Naive thymus-derived CD8-positive, alpha-beta T cell (primary cell): ENCODE measurements at regions of chr5 and their contacts with region 1.

Region 1: DNA sequence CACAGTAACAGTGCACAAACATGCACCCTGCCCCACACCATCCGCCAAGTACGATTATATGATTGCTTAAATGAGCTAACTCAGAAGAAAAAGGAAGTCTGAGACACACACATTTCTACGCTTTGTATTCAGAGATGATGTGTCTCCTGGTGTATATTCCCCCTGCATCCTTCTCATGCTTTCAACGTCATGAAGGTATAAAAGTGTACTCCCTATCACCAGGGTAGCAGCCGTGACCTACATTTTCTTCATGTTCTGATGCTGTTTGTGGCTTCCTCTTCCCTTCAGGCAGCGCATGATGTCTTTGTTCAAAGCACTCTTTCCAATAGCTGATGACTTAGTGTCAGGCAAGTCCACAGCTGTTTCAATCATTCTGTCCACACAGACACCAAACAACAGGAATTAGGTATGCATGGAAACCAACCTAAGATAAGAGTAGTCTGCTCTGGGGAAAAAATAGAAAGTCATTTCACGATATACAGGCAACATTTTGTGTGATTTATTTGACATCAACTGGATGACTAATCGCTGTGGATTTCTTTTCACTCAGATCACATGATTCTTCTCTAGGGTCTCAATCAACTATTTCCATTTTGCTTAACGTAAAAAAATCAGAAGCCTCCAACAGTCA is 269.4 kb upstream of the PTGER4 start:
- DNase-seq: peak; percentile 24 to 95 (median 83)
- ATAC-seq: peak; percentile 78 to 80
- H3K4me3 Mint-ChIP-seq: peak overlapping the region; percentile 59 to 84 (median 78)
- H3K27ac Mint-ChIP-seq: peak overlapping the region; percentile 97 to 100 (median 99)
- H3K4me1 Mint-ChIP-seq: peaks cover 20 to 75% (median 62%) of the 10 kb centered on the region in 4 donors
- H3K27me3 Mint-ChIP-seq: no peaks in the 10 kb centered on the region

Region 2: GRCh38 chr5:40223884-40224402 is 186.4 kb before region 1 on chr5:
- POLR2A ChIA-PET with region 1: no interaction called
- DNase-seq: no peak
- ATAC-seq: no peak
- H3K4me3 Mint-ChIP-seq: no peak overlapping the region
- H3K27ac Mint-ChIP-seq: peak overlapping the region in 1 of 10 donors; percentile 7
- H3K4me1 Mint-ChIP-seq: peaks cover 2 to 13% (median 9%) of the 10 kb centered on the region in 4 donors
- H3K27me3 Mint-ChIP-seq: peaks cover 0 to 5% (median 0%) of the 10 kb centered on the region in 5 donors

Region 3: DNA sequence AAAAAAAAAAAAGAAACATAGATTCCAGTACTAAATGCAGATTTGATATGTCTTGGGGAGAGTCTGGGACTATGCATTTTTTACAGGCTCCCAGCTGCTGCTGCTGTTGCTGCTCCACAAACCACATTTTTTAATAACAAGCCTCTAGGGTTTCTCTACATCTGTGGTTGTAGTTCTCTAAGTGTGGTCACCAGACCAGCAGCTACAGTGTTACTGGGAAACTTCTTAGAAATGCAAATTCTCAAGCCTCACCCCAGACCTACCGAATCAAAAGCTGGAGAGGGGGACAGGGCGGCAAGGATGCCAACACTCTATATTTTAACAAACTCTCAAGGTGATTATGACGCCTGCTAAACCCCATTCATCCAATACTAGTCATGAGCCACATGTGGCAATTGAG is 24.1 kb before region 1 on chr5:
- POLR2A ChIA-PET with region 1: interaction called, 15 read pairs
- DNase-seq: peak in 1 of 10 donors; percentile 17
- ATAC-seq: peak; percentile 50 to 54
- H3K4me3 Mint-ChIP-seq: peak overlapping the region in 2 of 10 donors; percentile 25 to 33
- H3K27ac Mint-ChIP-seq: peak overlapping the region in 8 of 10 donors; percentile 11 to 79 (median 72)
- H3K4me1 Mint-ChIP-seq: peaks cover 9 to 89% (median 63%) of the 10 kb centered on the region in 4 donors
- H3K27me3 Mint-ChIP-seq: no peaks in the 10 kb centered on the region

Region 4: GRCh38 chr5:40431734-40432133 is 21.4 kb after region 1 on chr5:
- POLR2A ChIA-PET with region 1: interaction called, 96 read pairs
- DNase-seq: no peak
- ATAC-seq: no peak
- H3K4me3 Mint-ChIP-seq: no peak overlapping the region
- H3K27ac Mint-ChIP-seq: peak overlapping the region in 1 of 10 donors; percentile 39
- H3K4me1 Mint-ChIP-seq: peaks cover 15 to 46% (median 35%) of the 10 kb centered on the region in 4 donors
- H3K27me3 Mint-ChIP-seq: no peaks in the 10 kb centered on the region

Region 5: DNA sequence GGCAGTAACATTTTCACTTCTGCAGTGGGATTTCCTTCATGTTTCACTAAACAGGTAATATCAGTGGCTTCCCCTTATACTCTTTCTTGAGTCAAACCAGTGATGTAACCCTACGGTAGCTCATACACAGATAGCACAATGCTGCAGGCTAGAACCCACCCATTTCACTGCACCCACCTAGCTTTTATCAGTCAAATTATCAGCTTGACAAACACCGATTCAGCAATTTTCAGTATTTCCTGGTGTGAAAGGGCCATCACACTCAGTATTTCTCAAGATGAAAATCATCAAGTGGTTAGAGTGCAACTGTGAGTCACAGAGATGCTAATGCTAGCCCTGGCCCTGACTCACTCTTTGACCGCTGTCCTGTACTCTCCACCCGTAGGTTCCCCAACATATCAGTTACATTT is 27.1 kb after region 1 on chr5:
- POLR2A ChIA-PET with region 1: interaction called, 96 read pairs
- DNase-seq: peak in 3 of 10 donors; percentile 12 to 35 (median 14)
- ATAC-seq: no peak
- H3K4me3 Mint-ChIP-seq: peak overlapping the region in 7 of 10 donors; percentile 9 to 69 (median 33)
- H3K27ac Mint-ChIP-seq: peak overlapping the region; percentile 81 to 98 (median 94)
- H3K4me1 Mint-ChIP-seq: peaks cover 33 to 72% (median 65%) of the 10 kb centered on the region in 4 donors
- H3K27me3 Mint-ChIP-seq: no peaks in the 10 kb centered on the region

Region 6: GRCh38 chr5:40477856-40478546 is 67.7 kb after region 1 on chr5:
- POLR2A ChIA-PET with region 1: no interaction called
- DNase-seq: no peak
- ATAC-seq: no peak
- H3K4me3 Mint-ChIP-seq: no peak overlapping the region
- H3K27ac Mint-ChIP-seq: no peak overlapping the region
- H3K4me1 Mint-ChIP-seq: peaks cover 0 to 8% (median 1%) of the 10 kb centered on the region in 4 donors
- H3K27me3 Mint-ChIP-seq: no peaks in the 10 kb centered on the region

Region 7: DNA sequence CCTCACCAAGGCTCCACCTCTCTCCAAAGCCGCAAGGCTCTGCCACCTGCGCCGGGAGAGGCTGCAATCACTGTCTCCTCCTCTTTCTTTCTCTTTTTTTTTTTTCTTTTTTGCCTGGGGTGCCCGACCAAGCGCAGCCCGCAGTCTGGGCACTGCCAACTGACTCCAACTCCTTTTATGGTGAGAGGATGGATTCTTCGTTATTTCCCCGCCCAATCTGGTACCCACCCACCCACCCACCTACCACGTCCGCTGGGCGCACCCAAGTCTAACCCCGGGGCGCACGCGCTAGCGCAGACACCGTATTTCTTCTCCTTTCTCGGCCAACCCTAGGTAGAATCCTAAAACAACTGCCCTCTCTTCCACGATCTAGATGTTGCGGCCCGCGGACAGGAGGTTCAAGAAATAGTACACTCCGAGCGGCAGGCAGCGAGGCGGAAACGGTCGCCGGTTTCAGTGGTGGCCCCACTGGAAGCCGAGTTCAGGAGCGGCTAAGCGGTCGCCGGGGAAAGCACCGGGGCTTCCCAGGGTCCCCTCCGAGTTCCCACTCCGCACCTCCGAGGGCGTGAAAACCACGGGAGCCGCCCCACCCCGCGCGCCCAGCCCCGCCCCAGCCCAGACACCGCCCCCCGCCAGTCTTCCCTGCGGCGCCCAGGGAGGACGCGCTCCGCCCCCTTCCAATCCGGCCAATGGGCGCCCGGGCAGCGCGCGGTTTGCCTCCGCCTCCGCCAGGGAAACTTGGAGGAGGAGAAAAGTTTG is 269.0 kb after region 1 on chr5:
- POLR2A ChIA-PET with region 1: interaction called, 31 read pairs
- DNase-seq: peak; percentile 83 to 92 (median 89)
- ATAC-seq: peak; percentile 65 to 68
- H3K4me3 Mint-ChIP-seq: peak overlapping the region; percentile 90 to 100 (median 97)
- H3K27ac Mint-ChIP-seq: peak overlapping the region; percentile 92 to 99 (median 98)
- H3K4me1 Mint-ChIP-seq: peaks cover 32 to 83% (median 56%) of the 10 kb centered on the region in 4 donors
- H3K27me3 Mint-ChIP-seq: no peaks in the 10 kb centered on the region